ENCODE measurements at regions of chr19 and their contacts with region 1.

Region 1: GRCh38 chr19:45283443-45284033 is 32.5 kb downstream of the MARK4 start:
- DNase-seq: no peak
- ATAC-seq: no peak
- H3K4me3 ChIP-seq: no peak overlapping the region
- H3K4me3 Mint-ChIP-seq: no peak overlapping the region
- H3K27ac ChIP-seq: no peak overlapping the region
- H3K27ac Mint-ChIP-seq: no peak overlapping the region
- H3K4me1 ChIP-seq: no peaks in the 10 kb centered on the region
- H3K4me1 Mint-ChIP-seq: no peaks in the 10 kb centered on the region
- H3K27me3 ChIP-seq: no peaks in the 10 kb centered on the region
- H3K27me3 Mint-ChIP-seq: no peaks in the 10 kb centered on the region

Region 2: GRCh38 chr19:45670670-45671453 is 387.3 kb after region 1 on chr19:
- CTCF ChIA-PET with region 1: no interaction called
- POLR2A ChIA-PET with region 1: interaction called in 1 of 2 experiments, 10 read pairs
- DNase-seq: peak in 21 of 35 experiments; percentile 7 to 66 (median 36)
- ATAC-seq: peak in 1 of 4 experiments; percentile 32
- H3K4me3 ChIP-seq: no peak overlapping the region
- H3K4me3 Mint-ChIP-seq: peak overlapping the region; percentile 9 to 86 (median 37)
- H3K27ac ChIP-seq: no peak overlapping the region
- H3K27ac Mint-ChIP-seq: peak overlapping the region in 1 of 2 donors; percentile 55
- H3K4me1 ChIP-seq: peaks cover 6 to 39% of the 10 kb centered on the region in 2 experiments
- H3K4me1 Mint-ChIP-seq: peaks cover 33 to 40% (median 34%) of the 10 kb centered on the region in 3 donors
- H3K27me3 ChIP-seq: peaks cover 5 to 36% of the 10 kb centered on the region in 2 experiments
- H3K27me3 Mint-ChIP-seq: peaks cover 13 to 27% of the 10 kb centered on the region in 2 donors